Natural killer cell (primary cell): ENCODE measurements at regions of chr2 and their contacts with region 1.

Region 1: GRCh38 chr2:101983928-101984327 is 7.8 kb upstream of the IL1R2 start:
- DNase-seq: no peak
- ATAC-seq: no peak
- H3K4me3 ChIP-seq: no peak overlapping the region
- H3K4me3 Mint-ChIP-seq: no peak overlapping the region
- H3K27ac ChIP-seq: no peak overlapping the region
- H3K27ac Mint-ChIP-seq: no peak overlapping the region
- H3K4me1 ChIP-seq: peaks cover 70% of the 10 kb centered on the region
- H3K4me1 Mint-ChIP-seq: peaks cover 56 to 62% of the 10 kb centered on the region in 2 donors
- H3K27me3 ChIP-seq: peaks cover 21% of the 10 kb centered on the region
- H3K27me3 Mint-ChIP-seq: peaks cover 32 to 55% of the 10 kb centered on the region in 2 donors
- CTCF ChIP-seq: no peak

Region 2: DNA sequence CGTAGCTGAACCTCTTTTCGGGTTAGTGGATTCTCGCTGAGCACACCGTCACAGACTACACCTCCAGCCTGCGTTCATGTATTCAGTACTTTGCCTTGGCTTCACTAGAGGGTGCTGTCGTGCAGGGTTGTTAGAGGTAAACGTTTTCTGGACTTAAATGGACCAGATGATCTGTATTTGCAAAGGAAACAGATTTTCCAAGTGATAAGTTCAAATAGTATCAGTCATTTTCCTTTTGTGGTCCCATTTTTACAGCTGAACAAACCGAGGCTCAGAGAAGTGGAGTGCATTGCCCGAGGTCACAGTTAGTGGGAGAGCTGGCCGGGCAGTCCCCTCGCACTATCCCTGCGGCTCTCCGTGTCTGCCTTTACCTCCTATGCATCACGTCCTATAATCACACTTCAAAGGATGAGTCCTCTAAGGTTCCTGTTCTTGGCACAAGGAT is 160.6 kb before region 1 on chr2:
- intact Hi-C with region 1: loop called (anchors 5 kb)
- DNase-seq: peak; percentile 44 to 86
- ATAC-seq: peak; percentile 84 to 94 (median 90)
- H3K4me3 ChIP-seq: no peak overlapping the region
- H3K4me3 Mint-ChIP-seq: no peak overlapping the region
- H3K27ac ChIP-seq: no peak overlapping the region
- H3K27ac Mint-ChIP-seq: peak overlapping the region; percentile 33 to 37
- H3K4me1 ChIP-seq: peaks cover 10% of the 10 kb centered on the region
- H3K4me1 Mint-ChIP-seq: peaks cover 48 to 51% of the 10 kb centered on the region in 2 donors
- H3K27me3 ChIP-seq: no peaks in the 10 kb centered on the region
- H3K27me3 Mint-ChIP-seq: no peaks in the 10 kb centered on the region
- CTCF ChIP-seq: peak; percentile 74

Region 3: GRCh38 chr2:102005989-102006885 is 22.3 kb after region 1 on chr2:
- intact Hi-C with region 1: loop called (anchors 2 kb)
- DNase-seq: peak in 1 of 2 donors; percentile 68
- ATAC-seq: peak in 2 of 3 donors; percentile 55 to 58
- H3K4me3 ChIP-seq: no peak overlapping the region
- H3K4me3 Mint-ChIP-seq: peak overlapping the region; percentile 3
- H3K27ac ChIP-seq: no peak overlapping the region
- H3K27ac Mint-ChIP-seq: no peak overlapping the region
- H3K4me1 ChIP-seq: peaks cover 36% of the 10 kb centered on the region
- H3K4me1 Mint-ChIP-seq: peaks cover 2 to 18% of the 10 kb centered on the region in 2 donors
- H3K27me3 ChIP-seq: peaks cover 16% of the 10 kb centered on the region
- H3K27me3 Mint-ChIP-seq: peaks cover 42 to 50% of the 10 kb centered on the region in 2 donors
- CTCF ChIP-seq: peak; percentile 69